ENCODE measurements at regions of chr22 and their contacts with region 1.

Region 1: DNA sequence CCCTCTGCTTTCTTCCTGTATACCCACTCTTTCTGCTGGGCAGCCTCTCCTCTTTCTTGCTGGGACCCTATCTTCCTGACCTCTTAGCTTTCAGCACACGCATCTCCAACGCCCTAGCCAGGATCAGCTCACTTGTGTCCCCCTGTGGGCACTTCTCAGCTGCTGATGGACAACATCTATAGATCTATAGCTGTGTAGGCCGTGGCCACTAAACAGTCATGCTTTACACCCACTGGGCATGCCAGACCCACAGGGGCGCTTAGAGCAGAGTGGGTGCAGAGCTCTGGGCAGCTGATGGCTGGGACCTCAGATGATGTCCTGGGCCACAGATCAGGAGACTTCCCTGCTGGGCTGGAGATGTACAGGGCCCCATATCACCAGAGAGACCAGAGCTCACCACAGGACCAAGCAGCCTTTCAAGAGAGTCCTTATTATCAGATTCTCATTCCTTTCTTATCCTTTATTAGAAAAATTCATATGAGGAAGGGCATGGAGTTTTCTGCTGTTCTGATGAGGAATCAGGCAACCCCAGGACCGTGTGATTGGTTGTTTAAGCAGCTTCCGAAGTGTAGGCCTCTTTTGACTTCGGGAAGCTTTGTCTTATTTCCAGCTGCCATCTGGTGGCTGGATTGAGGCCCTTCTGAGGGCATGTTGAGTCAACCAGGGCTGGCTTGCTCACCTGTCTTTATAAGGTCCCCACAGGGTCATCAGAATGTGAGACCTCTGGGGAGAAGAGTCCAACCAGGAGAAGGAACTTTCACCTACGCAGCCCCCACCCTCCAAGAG is 60.5 kb downstream of the OSBP2 start:
- DNase-seq: peak; percentile 46
- H3K4me3 ChIP-seq: no peak overlapping the region
- CTCF ChIP-seq: peak; percentile 79

Region 2: GRCh38 chr22:30444632-30445437 is 310.3 kb before region 1 on chr22:
- CTCF ChIA-PET with region 1: interaction called, 28 read pairs
- POLR2A ChIA-PET with region 1: no interaction called
- DNase-seq: no peak
- H3K4me3 ChIP-seq: no peak overlapping the region
- CTCF ChIP-seq: peak; percentile 75

Region 3: DNA sequence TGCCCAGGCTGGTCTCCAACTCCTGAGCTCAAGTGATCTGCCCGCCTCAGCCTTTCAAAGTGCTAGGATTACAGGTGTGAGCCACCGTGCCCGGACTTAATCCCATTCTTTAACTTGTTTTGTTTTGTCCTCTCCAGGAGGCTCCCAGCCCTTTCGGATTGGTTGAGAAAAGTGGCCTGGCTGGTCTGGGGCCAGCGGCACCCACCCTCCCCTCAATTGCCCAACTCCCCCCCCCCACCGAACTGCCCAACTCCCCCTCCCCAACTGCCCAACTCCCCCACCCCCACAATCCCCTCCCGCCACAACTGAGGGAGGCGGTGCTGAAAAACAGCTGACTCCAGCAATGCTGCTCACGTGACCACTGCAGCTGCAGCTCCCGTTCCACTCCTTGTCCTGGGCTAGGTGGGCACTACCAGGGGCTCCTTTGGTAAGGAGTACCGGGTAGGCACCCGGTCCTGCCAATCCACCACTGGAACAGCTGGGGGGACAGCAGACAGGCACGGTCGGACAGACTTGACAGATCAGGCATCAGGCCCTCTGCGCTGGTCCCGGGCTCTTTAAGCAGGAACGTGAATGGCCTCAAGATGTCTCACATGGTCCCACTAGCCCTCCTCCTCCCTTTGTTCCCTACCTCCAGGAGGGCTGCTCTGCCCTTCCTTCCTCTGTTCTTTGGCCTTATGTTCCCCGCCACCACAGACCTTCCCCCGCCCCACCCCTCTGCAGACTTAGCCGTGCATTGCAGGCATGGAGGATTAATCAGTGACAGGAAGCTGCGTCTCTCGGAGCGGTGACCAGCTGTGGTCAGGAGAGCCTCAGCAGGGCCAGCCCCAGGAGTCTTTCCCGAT is 148.5 kb before region 1 on chr22 and contains the start of gene TCN2:
- CTCF ChIA-PET with region 1: interaction called, 71 read pairs
- POLR2A ChIA-PET with region 1: no interaction called
- DNase-seq: no peak
- H3K4me3 ChIP-seq: peak within 1 kb of the TSS; percentile 59
- CTCF ChIP-seq: no peak

Region 4: GRCh38 chr22:30634471-30635233 is 120.5 kb before region 1 on chr22:
- CTCF ChIA-PET with region 1: interaction called, 518 read pairs
- POLR2A ChIA-PET with region 1: interaction called, 20 read pairs
- DNase-seq: peak; percentile 54
- H3K4me3 ChIP-seq: peak overlapping the region; percentile 42
- CTCF ChIP-seq: peak; percentile 92

Region 5: GRCh38 chr22:30680991-30681770 is 74.0 kb before region 1 on chr22:
- CTCF ChIA-PET with region 1: interaction called, 10 read pairs
- POLR2A ChIA-PET with region 1: no interaction called
- DNase-seq: no peak
- H3K4me3 ChIP-seq: no peak overlapping the region
- CTCF ChIP-seq: no peak

Region 6: GRCh38 chr22:30733181-30733631 is 22.0 kb before region 1 on chr22:
- CTCF ChIA-PET with region 1: interaction called, 67 read pairs
- POLR2A ChIA-PET with region 1: no interaction called
- DNase-seq: no peak
- H3K4me3 ChIP-seq: no peak overlapping the region
- CTCF ChIP-seq: no peak

Region 7: GRCh38 chr22:30802202-30803166 is 47.3 kb after region 1 on chr22:
- CTCF ChIA-PET with region 1: no interaction called
- POLR2A ChIA-PET with region 1: no interaction called
- DNase-seq: peak; percentile 24
- H3K4me3 ChIP-seq: peak overlapping the region; percentile 40
- CTCF ChIP-seq: peak; percentile 50

Region 8: DNA sequence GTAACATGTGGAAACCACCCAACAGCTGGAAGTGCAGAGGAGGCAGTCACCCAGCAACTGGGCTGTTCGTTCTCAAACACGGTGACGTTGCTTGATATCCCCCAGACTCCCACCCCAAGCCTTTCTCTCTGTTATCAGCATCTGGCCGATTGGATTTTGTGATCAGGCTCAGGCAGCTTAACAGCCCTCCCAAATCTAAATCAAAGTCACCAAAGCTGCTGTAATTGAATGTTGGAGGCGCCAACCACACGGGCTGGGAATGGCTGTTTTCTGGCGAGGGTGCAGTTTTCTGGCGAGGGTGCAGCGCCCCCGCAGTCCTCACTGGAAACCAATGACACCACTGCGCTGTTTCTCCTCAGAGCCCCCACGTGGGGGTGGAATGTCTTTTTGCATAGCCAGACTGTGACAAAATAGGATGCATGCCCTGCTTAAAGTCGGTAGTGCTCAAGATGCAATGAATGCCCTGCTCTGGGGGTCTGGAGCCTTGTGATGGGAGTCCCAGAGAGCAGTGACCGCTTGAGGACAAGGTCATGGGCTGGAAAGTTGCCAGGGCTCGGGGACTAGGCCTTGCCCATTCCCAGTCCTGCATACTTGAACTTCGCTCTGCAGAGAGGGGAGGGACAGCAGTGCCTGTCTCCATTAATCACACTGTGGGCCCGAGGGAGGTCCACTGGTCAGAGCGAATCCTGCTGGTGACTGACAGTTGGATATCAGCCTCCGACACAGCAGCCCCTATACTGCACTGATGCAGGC is 108.1 kb after region 1 on chr22:
- CTCF ChIA-PET with region 1: no interaction called
- POLR2A ChIA-PET with region 1: no interaction called
- DNase-seq: no peak
- H3K4me3 ChIP-seq: no peak overlapping the region
- CTCF ChIP-seq: no peak

Region 9: DNA sequence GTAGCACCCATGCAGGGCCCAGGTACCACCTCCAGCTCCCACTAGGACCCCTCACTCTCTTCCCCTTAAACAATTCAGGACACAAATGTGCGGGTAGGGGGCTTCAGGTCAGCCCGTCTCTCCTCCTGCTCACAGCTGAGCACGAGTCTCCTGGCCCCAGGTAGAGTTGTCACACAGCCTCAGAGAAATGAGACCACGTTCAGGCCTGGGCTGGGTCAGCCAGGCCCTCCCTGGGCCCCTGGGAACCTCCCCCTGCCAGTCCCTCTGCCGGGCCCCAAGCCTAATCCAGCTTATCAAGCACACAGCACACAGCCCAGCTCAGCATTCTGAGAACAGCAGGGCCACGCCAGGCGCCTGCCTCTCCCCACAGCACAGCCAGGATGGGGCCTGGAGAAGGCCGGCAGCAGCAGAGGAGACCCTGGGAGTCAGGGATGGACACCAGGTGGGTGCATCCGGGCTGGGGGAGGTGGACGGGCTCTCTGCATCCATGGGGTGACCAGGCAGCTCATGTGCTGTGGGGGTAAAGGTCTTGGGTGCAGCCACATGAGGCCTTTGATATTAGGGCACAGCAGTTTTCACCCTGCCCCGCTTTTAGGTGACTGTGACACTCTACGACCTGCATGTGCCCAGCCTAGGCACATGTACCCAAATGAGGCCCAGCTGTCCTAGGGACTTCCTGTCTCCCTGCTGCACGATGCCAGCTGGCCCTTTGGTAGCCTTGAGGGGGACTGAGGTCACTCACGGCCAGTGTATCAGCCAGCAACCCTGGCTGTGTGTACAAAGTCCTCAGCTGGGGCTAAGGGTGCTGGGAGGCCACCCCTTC is 126.4 kb after region 1 on chr22:
- CTCF ChIA-PET with region 1: no interaction called
- POLR2A ChIA-PET with region 1: no interaction called
- DNase-seq: no peak
- H3K4me3 ChIP-seq: no peak overlapping the region
- CTCF ChIP-seq: no peak

Region 10: GRCh38 chr22:30920407-30920806 is 165.2 kb after region 1 on chr22:
- CTCF ChIA-PET with region 1: interaction called, 568 read pairs
- POLR2A ChIA-PET with region 1: interaction called, 3 read pairs
- DNase-seq: no peak
- H3K4me3 ChIP-seq: no peak overlapping the region
- CTCF ChIP-seq: peak; percentile 89